ENCODE measurements at regions of chr10 and their contacts with region 1.

Region 1: GRCh38 chr10:43348511-43349312 is 22.7 kb upstream of the FXYD4 start:
- DNase-seq: peak; percentile 92
- ATAC-seq: peak; percentile 100
- H3K4me3 Mint-ChIP-seq: no peak overlapping the region
- H3K27ac Mint-ChIP-seq: peak overlapping the region; percentile 45
- H3K4me1 Mint-ChIP-seq: peaks cover 15% of the 10 kb centered on the region
- H3K27me3 Mint-ChIP-seq: peaks cover 12% of the 10 kb centered on the region

Region 2: DNA sequence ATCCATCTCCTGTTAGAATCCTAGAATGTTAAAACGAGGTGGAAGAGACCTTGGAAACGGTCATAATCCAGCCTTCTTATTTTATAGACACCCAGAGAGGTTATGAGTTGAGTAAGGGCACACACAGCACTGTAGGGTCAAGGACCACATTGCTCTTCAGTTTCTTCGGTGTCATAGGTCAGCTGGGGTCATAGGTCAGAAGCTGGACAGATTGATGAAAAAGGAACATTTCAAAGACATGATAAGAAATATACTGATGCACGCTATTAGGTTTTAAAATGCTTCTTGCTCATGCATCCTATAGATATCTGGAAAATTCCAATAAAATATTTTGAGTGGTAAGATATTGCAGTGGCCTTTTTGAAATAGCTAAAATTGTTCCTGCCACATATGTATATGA is 626.1 kb before region 1 on chr10:
- CTCF ChIA-PET with region 1: no interaction called
- POLR2A ChIA-PET with region 1: no interaction called
- intact Hi-C with region 1: no loop called
- DNase-seq: no peak
- ATAC-seq: no peak
- H3K4me3 Mint-ChIP-seq: no peak overlapping the region
- H3K27ac Mint-ChIP-seq: no peak overlapping the region
- H3K4me1 Mint-ChIP-seq: no peaks in the 10 kb centered on the region
- H3K27me3 Mint-ChIP-seq: peaks cover 15% of the 10 kb centered on the region

Region 3: DNA sequence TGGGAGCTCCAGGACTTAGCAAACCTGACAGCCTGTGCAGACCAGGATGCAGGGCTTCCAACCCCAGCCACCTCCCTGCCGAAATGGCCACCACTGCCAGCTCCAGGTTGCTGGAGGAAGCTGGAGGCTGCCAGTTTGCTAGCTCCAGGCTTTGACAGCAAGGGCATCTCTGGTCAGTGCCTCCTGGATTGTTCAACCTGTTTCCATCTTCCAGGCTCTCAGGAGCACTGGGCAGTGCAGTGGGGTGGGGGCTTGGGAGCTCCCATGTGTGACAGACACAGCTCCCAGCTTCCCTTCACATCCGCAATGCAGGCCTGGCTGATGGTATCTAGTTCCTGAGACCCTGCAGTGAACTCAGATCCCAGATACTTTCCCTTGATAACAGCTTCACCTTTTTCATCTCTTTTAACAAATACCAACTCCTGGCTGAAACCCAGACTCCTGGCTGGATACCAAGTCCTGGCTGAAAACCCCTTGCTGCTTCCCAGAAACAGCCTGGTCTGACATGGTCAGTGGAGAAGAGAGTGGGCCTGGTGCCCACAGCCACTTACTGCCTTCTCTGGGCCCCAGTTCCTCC is 292.6 kb before region 1 on chr10:
- CTCF ChIA-PET with region 1: no interaction called
- POLR2A ChIA-PET with region 1: no interaction called
- intact Hi-C with region 1: no loop called
- DNase-seq: peak; percentile 1
- ATAC-seq: no peak
- H3K4me3 Mint-ChIP-seq: no peak overlapping the region
- H3K27ac Mint-ChIP-seq: no peak overlapping the region
- H3K4me1 Mint-ChIP-seq: no peaks in the 10 kb centered on the region
- H3K27me3 Mint-ChIP-seq: peaks cover 9% of the 10 kb centered on the region

Region 4: DNA sequence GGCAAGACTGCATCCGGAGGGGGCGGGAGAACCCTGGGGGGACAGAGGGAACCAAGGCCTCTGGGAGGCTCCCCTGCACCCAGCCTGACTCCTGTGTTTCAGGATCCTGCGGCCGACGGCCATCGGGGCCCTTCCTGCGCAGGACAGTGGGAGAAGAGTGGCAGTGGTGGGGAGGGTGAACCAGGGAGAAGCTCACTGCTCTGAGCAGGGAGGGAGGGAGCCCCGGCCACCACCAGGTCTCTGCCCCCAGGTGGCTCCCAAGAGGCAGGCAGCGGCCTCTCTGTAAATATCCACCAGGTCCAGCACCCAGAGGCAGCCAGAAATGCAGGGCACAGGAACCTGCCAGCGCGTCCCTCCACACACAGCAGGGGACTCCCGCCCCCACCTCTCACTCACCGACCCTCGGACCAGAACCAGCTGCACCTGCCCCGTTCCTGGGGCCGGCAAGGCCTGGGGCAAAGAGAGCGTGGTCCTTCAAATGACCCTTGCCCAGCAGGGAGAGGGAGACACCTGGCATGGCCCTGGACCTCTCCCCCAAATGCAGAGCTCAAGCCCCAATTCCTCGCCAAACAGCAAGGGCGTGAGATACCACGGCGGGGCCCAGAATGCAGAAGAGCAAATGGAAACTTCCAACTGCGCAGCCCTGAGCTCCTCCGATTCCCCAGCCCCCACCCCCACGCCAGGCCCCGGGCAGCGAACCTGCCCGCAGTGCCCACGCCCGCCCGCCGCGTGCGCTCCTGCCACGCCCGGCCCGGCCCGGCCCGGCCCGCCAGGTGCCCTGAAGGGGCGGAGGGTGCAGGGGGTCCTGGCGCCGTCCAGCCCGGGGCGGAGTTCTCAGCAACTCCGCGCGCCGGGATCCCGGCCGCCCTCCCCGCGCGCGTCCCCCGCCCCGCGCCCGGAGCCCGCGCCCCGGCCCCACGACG is 82.7 kb before region 1 on chr10:
- CTCF ChIA-PET with region 1: interaction called, 4 read pairs
- POLR2A ChIA-PET with region 1: no interaction called
- intact Hi-C with region 1: loop called in 1 of 2 experiments (anchors 1 kb)
- DNase-seq: peak; percentile 62
- ATAC-seq: peak; percentile 76
- H3K4me3 Mint-ChIP-seq: peak overlapping the region; percentile 62
- H3K27ac Mint-ChIP-seq: no peak overlapping the region
- H3K4me1 Mint-ChIP-seq: peaks cover 3% of the 10 kb centered on the region
- H3K27me3 Mint-ChIP-seq: peaks cover 46% of the 10 kb centered on the region

Region 5: DNA sequence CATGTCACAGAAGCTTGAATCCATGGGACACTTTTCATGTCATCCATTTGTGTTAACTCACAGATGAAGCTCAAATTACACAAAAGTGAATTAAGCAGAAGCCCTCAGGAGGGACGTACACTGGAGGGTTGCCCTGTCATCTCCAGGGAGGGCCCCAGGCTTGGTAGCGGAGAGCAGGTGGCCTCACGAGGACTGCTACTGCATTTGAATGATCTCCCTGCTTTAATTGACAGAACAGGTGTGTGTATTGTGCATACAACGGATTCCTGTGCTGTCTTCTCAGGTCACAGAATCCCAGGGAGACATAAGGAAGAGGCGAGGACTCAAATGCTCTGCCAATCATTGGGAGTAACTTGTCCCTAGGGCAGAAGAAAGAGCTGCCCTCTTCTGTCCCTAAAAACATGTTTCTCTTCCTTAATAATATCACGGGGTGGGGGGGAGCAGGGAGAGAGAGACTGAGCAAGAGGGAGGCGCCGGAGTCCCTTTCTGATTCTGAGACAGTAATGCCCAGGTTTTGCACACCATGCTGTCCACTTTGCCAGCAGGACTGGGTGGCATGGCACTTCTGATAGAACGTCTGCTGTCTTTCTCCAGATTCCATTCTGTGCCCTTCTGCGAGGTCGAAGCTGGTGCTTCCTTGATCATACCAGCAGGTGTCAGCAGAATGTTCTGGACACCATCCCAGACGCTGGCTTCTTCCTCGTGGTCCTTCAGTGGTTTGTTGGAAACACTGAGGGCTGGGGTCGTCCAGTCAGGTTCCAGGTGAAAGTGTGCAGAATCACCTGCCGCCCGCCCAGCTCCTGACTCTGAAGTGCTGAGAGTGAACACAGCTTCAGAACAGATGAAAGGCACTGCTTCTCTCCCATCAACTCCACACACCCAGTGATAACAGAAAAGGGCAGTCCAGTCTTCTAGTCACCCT is 55.7 kb before region 1 on chr10:
- CTCF ChIA-PET with region 1: interaction called, 43 read pairs
- POLR2A ChIA-PET with region 1: no interaction called
- intact Hi-C with region 1: loop called (anchors 1 kb)
- DNase-seq: peak; percentile 66
- ATAC-seq: peak; percentile 79
- H3K4me3 Mint-ChIP-seq: no peak overlapping the region
- H3K27ac Mint-ChIP-seq: peak overlapping the region; percentile 62
- H3K4me1 Mint-ChIP-seq: peaks cover 24% of the 10 kb centered on the region
- H3K27me3 Mint-ChIP-seq: peaks cover 3% of the 10 kb centered on the region